ENCODE measurements at regions of chr20 and their contacts with region 1.

Region 1: GRCh38 chr20:41617931-41618806 is at the start of gene CHD6:
- DNase-seq: peak; percentile 94 to 100 (median 99)
- ATAC-seq: peak; percentile 96 to 97
- H3K4me3 Mint-ChIP-seq: peak within 1 kb of the TSS; percentile 89 to 98 (median 96)
- H3K27ac Mint-ChIP-seq: peak within 1 kb of the TSS; percentile 85 to 96 (median 94)
- H3K4me1 Mint-ChIP-seq: peaks cover 20 to 53% (median 46%) of the 10 kb centered on the region in 4 donors
- H3K27me3 Mint-ChIP-seq: no peaks in the 10 kb centered on the region
- polyA plus RNA-seq, gene CHD6: 44.3 to 57.4 (median 56.3) TPM

Region 2: DNA sequence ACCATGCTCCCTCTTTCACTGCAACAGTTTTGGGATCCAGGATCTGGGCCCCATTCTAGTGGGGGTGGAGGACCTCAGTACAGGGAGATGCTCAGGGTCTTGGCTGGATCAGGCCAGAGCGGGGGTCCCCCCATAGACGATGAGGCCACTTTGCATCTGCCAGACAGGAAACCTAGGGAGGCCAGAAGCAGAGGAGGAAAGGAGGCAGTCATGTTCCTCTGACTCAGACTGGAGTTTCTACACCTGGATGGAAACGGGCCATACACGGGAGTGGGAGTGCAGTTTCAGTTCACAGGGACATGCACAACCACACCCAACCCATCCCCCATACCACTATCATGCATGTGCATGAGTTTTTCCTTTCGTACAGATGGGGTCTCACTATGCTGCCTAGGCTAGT is 248.0 kb before region 1 on chr20:
- POLR2A ChIA-PET with region 1: no interaction called
- DNase-seq: no peak
- ATAC-seq: no peak
- H3K4me3 Mint-ChIP-seq: no peak overlapping the region
- H3K27ac Mint-ChIP-seq: no peak overlapping the region
- H3K4me1 Mint-ChIP-seq: peaks cover 1 to 10% (median 8%) of the 10 kb centered on the region in 4 donors
- H3K27me3 Mint-ChIP-seq: peaks cover 14 to 69% (median 53%) of the 10 kb centered on the region in 5 donors

Region 3: GRCh38 chr20:41587956-41588355 is 30.2 kb before region 1 on chr20:
- POLR2A ChIA-PET with region 1: no interaction called
- DNase-seq: no peak
- ATAC-seq: no peak
- H3K4me3 Mint-ChIP-seq: peak overlapping the region in 3 of 10 donors; percentile 5 to 32 (median 26)
- H3K27ac Mint-ChIP-seq: no peak overlapping the region
- H3K4me1 Mint-ChIP-seq: peaks cover 4 to 31% (median 28%) of the 10 kb centered on the region in 4 donors
- H3K27me3 Mint-ChIP-seq: no peaks in the 10 kb centered on the region

Region 4: GRCh38 chr20:41693136-41693979 is 75.2 kb after region 1 on chr20:
- POLR2A ChIA-PET with region 1: interaction called, 45 read pairs
- DNase-seq: peak; percentile 58 to 92 (median 80)
- ATAC-seq: peak; percentile 86 to 87
- H3K4me3 Mint-ChIP-seq: peak overlapping the region; percentile 89 to 99 (median 94)
- H3K27ac Mint-ChIP-seq: peak overlapping the region; percentile 93 to 99 (median 96)
- H3K4me1 Mint-ChIP-seq: peaks cover 12 to 21% (median 18%) of the 10 kb centered on the region in 4 donors
- H3K27me3 Mint-ChIP-seq: peaks cover 3 to 12% (median 5%) of the 10 kb centered on the region in 5 donors

Measured in naive thymus-derived CD8-positive, alpha-beta T cell (primary cell).